Caco-2 (cell line): ENCODE measurements at regions of chr2 and their contacts with region 1.

Region 1: DNA sequence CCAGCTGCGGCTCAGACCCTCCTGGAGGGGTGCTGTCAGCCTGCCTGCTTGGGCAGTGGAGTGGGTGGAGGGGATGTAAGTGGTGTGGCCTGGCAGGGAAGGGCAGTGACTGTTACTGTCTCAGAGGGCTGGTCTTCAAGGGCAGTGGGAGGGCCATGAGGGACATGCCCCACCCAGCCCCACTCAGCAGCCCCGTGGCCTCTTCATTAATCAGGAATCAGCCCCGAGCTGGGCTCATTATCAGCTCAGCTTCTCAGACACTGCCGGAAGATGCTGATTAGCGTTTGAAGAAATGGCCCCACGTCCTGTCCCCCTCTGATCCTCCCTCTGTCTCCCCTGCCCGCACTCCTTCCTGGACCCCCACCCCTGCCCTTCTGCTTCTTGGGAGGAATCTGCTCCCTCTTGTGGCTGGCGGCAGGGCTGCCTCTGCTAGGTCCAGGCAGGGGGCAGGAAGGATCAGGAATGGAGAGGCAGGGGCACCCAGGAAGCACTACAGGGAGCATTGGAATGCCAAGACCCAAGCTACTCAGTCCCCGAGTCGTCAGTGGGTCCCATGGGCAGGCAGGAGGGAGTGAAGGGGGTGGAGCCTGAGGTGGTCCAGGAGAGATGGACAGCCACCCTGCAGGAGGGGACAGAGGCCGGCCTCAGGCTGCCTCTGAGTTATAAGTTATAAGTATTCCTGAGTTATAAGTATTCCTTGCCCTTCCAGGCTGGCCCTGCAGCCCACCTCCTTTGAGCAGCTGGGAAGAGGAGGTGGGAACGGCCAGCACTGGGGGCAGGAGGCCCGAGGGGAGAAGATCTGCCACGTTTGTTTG is 7.0 kb downstream of the ASIC4 start:
- DNase-seq: peak; percentile 73 to 74
- H3K4me3 ChIP-seq: 0 out of 2 replicates have a peak overlapping the region, but pooled peaks have one; percentile 5
- H3K4me3 Mint-ChIP-seq: peak overlapping the region; percentile 58
- H3K27ac Mint-ChIP-seq: peak overlapping the region; percentile 73
- H3K4me1 ChIP-seq: peaks cover 24% of the 10 kb centered on the region
- H3K4me1 Mint-ChIP-seq: peaks cover 22% of the 10 kb centered on the region
- H3K27me3 ChIP-seq: no peaks in the 10 kb centered on the region
- H3K27me3 Mint-ChIP-seq: peaks cover 13% of the 10 kb centered on the region
- CTCF ChIP-seq: peak; percentile 81 to 97

Region 2: GRCh38 chr2:219475697-219476651 is 45.3 kb before region 1 on chr2:
- CTCF ChIA-PET with region 1: interaction called, 7 read pairs
- POLR2A ChIA-PET with region 1: no interaction called
- intact Hi-C with region 1: loop called (anchors 1 kb)
- DNase-seq: peak; percentile 74 to 87
- H3K4me3 ChIP-seq: no peak overlapping the region
- H3K4me3 Mint-ChIP-seq: peak overlapping the region; percentile 10
- H3K27ac Mint-ChIP-seq: no peak overlapping the region
- H3K4me1 ChIP-seq: no peaks in the 10 kb centered on the region
- H3K4me1 Mint-ChIP-seq: no peaks in the 10 kb centered on the region
- H3K27me3 ChIP-seq: no peaks in the 10 kb centered on the region
- H3K27me3 Mint-ChIP-seq: no peaks in the 10 kb centered on the region
- CTCF ChIP-seq: peak; percentile 91 to 94